Heart right ventricle (tissue), 16 donors: ENCODE measurements at regions of chr3 and their contacts with region 1.

Region 1: GRCh38 chr3:139378587-139379241 is 10.7 kb downstream of the COPB2 start:
- DNase-seq: no peak
- ATAC-seq: no peak
- H3K4me3 ChIP-seq: no peak overlapping the region
- H3K27ac ChIP-seq: no peak overlapping the region
- H3K4me1 ChIP-seq: peaks cover 0 to 15% (median 0%) of the 10 kb centered on the region in 9 donors
- H3K27me3 ChIP-seq: no peaks in the 10 kb centered on the region
- CTCF ChIP-seq: no peak

Region 2: DNA sequence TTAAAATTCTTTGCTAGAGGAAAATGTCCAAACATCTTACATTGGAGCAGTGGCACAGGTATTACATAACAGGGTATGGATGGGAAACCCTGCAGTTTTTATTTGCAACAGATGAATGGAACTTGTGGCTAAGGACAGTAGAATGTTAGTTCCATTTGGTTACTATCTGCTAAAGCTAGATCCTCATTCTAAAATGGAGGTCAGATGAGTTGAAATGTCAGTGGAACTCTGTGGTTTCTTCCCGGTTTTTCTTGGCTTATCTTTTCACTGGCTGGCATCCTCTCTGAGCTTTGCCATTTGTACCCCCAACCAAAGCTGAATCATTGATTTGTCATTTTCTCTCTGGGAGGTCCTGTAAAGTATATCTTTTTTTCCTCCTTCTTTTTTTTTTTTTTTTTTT is 1122.7 kb before region 1 on chr3:
- intact Hi-C with region 1: loop called in 1 of 10 experiments (anchors 10 kb)
- DNase-seq: no peak
- ATAC-seq: no peak
- H3K4me3 ChIP-seq: no peak overlapping the region
- H3K27ac ChIP-seq: no peak overlapping the region
- H3K4me1 ChIP-seq: no peaks in the 10 kb centered on the region
- H3K27me3 ChIP-seq: no peaks in the 10 kb centered on the region
- CTCF ChIP-seq: no peak